Vagina (tissue), 2 donors: ENCODE measurements at regions of chr1 and their contacts with region 1.

Region 1: DNA sequence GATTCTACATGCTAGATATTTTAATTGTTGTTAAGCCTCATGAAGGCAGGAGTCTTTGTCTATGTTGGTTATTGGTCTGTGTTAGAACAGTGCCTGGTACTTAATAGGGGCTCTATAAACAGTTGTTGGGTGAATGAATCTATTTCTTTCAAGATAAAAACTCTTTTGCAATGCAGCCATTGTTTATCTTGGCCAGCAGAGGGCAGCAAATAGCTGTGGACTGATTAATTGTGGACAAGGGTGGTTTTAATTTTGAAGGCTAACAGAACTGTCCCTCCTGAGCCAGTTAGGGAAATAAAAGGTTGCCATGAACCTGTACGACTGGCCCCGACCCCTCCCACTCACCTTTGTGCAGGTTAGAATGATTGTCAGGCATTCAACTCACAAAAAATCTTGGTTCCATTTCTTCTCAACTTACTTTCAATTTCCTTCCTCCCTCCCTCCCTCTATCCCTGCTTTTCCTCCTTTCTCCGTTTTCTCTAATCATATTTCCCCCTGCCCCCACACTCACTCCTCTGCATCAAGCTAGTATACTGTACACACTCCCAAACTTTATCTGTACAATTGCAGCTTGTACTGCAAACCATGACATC is 66.3 kb upstream of the DIRAS3 start:
- DNase-seq: no peak
- H3K4me3 ChIP-seq: peak overlapping the region in 1 of 2 donors; percentile 22
- H3K27ac ChIP-seq: no peak overlapping the region
- H3K4me1 ChIP-seq: peaks cover 11% of the 10 kb centered on the region
- H3K27me3 ChIP-seq: no peaks in the 10 kb centered on the region
- CTCF ChIP-seq: peak; percentile 71 to 88 (median 85)
- POLR2A ChIP-seq: no peak

Region 2: DNA sequence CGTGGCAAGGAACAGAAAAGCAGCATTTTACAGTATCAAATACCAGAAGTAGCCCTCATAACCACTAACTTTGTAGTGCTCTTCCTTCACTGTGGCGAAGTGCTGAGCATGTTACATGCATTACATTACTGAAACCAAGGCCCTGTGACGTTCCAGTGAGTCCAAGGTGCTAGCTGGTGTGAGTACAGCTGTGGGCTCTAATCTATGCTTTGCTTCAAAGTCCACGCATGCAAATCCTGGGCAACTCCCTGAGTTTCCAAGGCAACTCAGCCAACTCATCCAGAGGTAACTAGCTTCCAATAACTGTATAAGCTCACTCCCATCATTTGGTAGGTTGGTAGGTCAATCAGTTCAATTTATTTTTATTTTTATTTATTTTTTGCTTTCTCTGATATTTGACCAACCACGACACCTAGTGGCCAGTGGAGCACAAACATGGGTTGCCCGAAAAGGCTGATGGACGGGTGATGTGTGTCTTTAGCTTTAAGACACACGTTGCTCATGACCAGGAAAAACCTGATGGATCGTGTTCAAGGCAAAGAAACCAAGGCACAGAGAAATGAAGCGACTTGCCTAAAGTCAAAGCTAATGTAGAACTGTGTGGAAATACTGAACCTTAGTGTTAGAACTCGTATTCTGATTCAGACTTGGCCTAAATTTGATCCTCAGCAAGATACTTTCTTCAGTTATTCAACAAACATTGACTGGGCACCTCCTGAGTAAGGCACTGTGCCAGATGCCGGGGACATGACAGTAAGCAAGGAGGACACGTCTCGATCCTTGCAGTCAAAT is 356.5 kb before region 1 on chr1:
- intact Hi-C with region 1: loop called (anchors 5 kb)
- DNase-seq: peak in 1 of 2 donors; percentile 82
- H3K4me3 ChIP-seq: no peak overlapping the region
- H3K27ac ChIP-seq: peak overlapping the region; percentile 40
- H3K4me1 ChIP-seq: peaks cover 33% of the 10 kb centered on the region
- H3K27me3 ChIP-seq: no peaks in the 10 kb centered on the region
- CTCF ChIP-seq: peak; percentile 83 to 94 (median 85)
- POLR2A ChIP-seq: no peak

Region 3: DNA sequence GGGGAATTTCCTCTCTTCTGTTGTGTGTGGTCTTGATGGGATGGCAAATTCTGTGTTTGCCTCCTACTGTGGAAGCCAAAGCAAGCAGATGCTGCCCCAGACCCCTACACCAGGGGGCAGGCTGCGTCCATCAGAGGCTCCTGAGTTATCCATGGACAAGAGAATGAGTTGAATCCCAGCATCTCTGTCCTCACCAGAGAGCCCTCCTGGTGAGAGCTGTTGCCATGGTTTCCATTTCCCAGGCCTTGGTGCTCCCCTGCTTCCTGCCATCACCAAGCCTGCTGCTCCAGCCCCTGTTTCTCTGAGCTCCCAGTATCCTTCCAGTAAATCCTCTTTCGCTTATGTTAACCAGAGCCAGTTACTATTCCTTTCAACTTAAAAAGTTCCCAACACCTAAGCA is 263.0 kb before region 1 on chr1:
- intact Hi-C with region 1: loop called (anchors 10 kb)
- DNase-seq: no peak
- H3K4me3 ChIP-seq: no peak overlapping the region
- H3K27ac ChIP-seq: no peak overlapping the region
- H3K4me1 ChIP-seq: peaks cover 17% of the 10 kb centered on the region
- H3K27me3 ChIP-seq: no peaks in the 10 kb centered on the region
- CTCF ChIP-seq: peak; percentile 33 to 48 (median 45)
- POLR2A ChIP-seq: no peak

Region 4: GRCh38 chr1:67987046-67987799 is 129.5 kb before region 1 on chr1:
- intact Hi-C with region 1: no loop called
- DNase-seq: no peak
- H3K4me3 ChIP-seq: no peak overlapping the region
- H3K27ac ChIP-seq: peak overlapping the region; percentile 60
- H3K4me1 ChIP-seq: peaks cover 13% of the 10 kb centered on the region
- H3K27me3 ChIP-seq: no peaks in the 10 kb centered on the region
- CTCF ChIP-seq: no peak
- POLR2A ChIP-seq: no peak

Region 5: GRCh38 chr1:68103884-68104554 is 12.7 kb before region 1 on chr1:
- intact Hi-C with region 1: no loop called
- DNase-seq: no peak
- H3K4me3 ChIP-seq: no peak overlapping the region
- H3K27ac ChIP-seq: peak overlapping the region; percentile 34
- H3K4me1 ChIP-seq: no peaks in the 10 kb centered on the region
- H3K27me3 ChIP-seq: no peaks in the 10 kb centered on the region
- CTCF ChIP-seq: no peak
- POLR2A ChIP-seq: no peak

Region 6: GRCh38 chr1:68346188-68346808 is 229.6 kb after region 1 on chr1:
- intact Hi-C with region 1: loop called (anchors 2 kb)
- DNase-seq: no peak
- H3K4me3 ChIP-seq: no peak overlapping the region
- H3K27ac ChIP-seq: no peak overlapping the region
- H3K4me1 ChIP-seq: no peaks in the 10 kb centered on the region
- H3K27me3 ChIP-seq: no peaks in the 10 kb centered on the region
- CTCF ChIP-seq: peak in 2 of 3 experiments; percentile 30 to 46
- POLR2A ChIP-seq: no peak